ENCODE measurements at regions of chrX and their contacts with region 1.

Region 1: DNA sequence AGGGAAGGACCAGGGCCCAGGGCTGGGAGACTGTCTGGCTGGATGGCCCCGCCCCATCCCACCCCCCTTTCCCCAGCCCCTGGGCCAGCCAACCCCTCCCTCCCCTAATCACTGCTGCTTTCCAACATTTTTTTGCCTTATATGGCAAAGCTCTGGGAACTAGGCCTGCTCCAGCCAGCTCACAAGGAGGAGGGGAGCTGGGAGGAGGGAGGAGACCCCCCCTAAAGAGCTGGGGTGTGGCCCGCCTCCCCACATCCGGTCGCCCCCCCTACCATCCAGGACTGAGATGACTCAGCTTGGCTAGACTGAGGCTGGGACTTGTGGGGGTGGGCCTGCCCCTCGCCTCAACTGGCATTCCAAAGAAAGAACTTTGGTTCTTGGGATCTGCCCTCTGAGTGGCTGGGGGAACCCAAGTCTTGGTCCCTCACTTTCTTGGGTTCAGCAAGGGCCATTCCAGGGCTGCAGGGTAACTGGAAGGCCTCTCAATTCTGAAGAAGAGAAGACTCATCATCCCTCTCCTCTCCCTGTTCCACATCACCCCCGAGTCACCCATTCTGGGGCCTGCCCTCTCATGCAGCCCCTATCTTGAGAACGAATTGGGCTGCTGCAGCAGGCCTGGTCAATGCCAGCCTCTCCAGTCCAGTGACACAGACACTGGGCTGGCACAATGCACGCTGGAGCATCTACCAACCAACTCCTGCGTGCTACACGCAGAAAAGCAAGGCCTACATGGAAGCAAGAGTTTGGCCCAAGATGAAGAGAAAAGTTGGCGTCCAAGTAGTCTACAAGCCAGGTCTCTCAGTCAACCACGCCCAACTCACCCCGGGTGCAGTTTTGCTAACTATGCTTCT is 4.8 kb downstream of the FLNA start:
- DNase-seq: peak; percentile 82
- H3K4me3 Mint-ChIP-seq: peak overlapping the region; percentile 96
- H3K27ac Mint-ChIP-seq: peak overlapping the region; percentile 96
- H3K4me1 Mint-ChIP-seq: peaks cover 24% of the 10 kb centered on the region
- H3K27me3 Mint-ChIP-seq: no peaks in the 10 kb centered on the region

Region 2: GRCh38 chrX:154333837-154334271 is 35.8 kb before region 1 on chrX:
- CTCF ChIA-PET with region 1: no interaction called
- POLR2A ChIA-PET with region 1: no interaction called
- intact Hi-C with region 1: no loop called
- DNase-seq: no peak
- H3K4me3 Mint-ChIP-seq: no peak overlapping the region
- H3K27ac Mint-ChIP-seq: peak overlapping the region; percentile 71
- H3K4me1 Mint-ChIP-seq: peaks cover 20% of the 10 kb centered on the region
- H3K27me3 Mint-ChIP-seq: no peaks in the 10 kb centered on the region

Region 3: GRCh38 chrX:154397819-154398724 is 28.4 kb after region 1 on chrX and contains the start of gene RPL10:
- CTCF ChIA-PET with region 1: interaction called, 17 read pairs
- POLR2A ChIA-PET with region 1: interaction called, 11 read pairs
- intact Hi-C with region 1: no loop called
- DNase-seq: peak; percentile 95
- H3K4me3 Mint-ChIP-seq: peak within 1 kb of the TSS; percentile 91
- H3K27ac Mint-ChIP-seq: peak within 1 kb of the TSS; percentile 100
- H3K4me1 Mint-ChIP-seq: peaks cover 7% of the 10 kb centered on the region
- H3K27me3 Mint-ChIP-seq: no peaks in the 10 kb centered on the region
- total RNA-seq, gene RPL10: 3,597 to 3,654 TPM

Region 4: GRCh38 chrX:154534862-154535670 is 165.4 kb after region 1 on chrX:
- CTCF ChIA-PET with region 1: interaction called, 11 read pairs
- POLR2A ChIA-PET with region 1: no interaction called
- intact Hi-C with region 1: no loop called
- DNase-seq: peak; percentile 91
- H3K4me3 Mint-ChIP-seq: no peak overlapping the region
- H3K27ac Mint-ChIP-seq: peak overlapping the region; percentile 56
- H3K4me1 Mint-ChIP-seq: peaks cover 8% of the 10 kb centered on the region
- H3K27me3 Mint-ChIP-seq: no peaks in the 10 kb centered on the region